Natural killer cell (primary cell): ENCODE measurements at regions of chr11 and their contacts with region 1.

Region 1: DNA sequence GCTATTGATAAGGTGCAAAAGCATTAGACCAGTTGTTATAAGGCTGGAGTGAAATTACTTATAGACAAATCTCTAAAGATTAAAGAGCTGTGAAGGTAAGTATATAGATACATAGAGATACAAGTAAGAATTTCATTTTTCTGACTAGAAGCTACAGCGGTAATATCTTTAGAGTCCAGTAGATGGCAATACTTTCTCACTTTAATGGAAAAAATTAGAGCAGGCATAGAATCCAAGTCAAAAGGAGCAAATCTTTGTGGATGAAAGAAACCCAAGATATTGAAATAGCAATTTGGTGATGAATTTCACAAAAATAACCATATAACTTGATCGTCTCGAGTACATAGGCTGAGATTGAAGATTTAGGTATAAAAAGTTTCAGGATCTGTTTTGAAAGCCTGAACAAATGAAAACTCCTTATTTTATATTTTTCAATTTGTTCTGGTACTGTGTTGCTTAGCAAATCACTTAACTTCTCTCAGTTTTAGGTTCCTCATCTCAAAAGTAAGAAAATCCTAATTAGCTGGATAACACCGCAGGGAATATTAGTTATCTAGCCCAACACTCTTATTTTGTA is 81.9 kb downstream of the UVRAG start:
- DNase-seq: peak in 1 of 2 donors; percentile 53
- ATAC-seq: peak in 2 of 3 donors; percentile 50 to 64
- H3K4me3 ChIP-seq: no peak overlapping the region
- H3K4me3 Mint-ChIP-seq: no peak overlapping the region
- H3K27ac ChIP-seq: no peak overlapping the region
- H3K27ac Mint-ChIP-seq: no peak overlapping the region
- H3K4me1 ChIP-seq: no peaks in the 10 kb centered on the region
- H3K4me1 Mint-ChIP-seq: peaks cover 0 to 9% of the 10 kb centered on the region in 2 donors
- H3K27me3 ChIP-seq: no peaks in the 10 kb centered on the region
- H3K27me3 Mint-ChIP-seq: no peaks in the 10 kb centered on the region
- CTCF ChIP-seq: peak; percentile 74

Region 2: GRCh38 chr11:75547580-75548058 is 349.3 kb before region 1 on chr11:
- intact Hi-C with region 1: no loop called
- DNase-seq: peak in 1 of 2 donors; percentile 67
- ATAC-seq: peak; percentile 49 to 68 (median 55)
- H3K4me3 ChIP-seq: no peak overlapping the region
- H3K4me3 Mint-ChIP-seq: no peak overlapping the region
- H3K27ac ChIP-seq: no peak overlapping the region
- H3K27ac Mint-ChIP-seq: peak overlapping the region in 1 of 2 donors; percentile 59
- H3K4me1 ChIP-seq: peaks cover 3% of the 10 kb centered on the region
- H3K4me1 Mint-ChIP-seq: peaks cover 0 to 9% of the 10 kb centered on the region in 2 donors
- H3K27me3 ChIP-seq: no peaks in the 10 kb centered on the region
- H3K27me3 Mint-ChIP-seq: peaks cover 0 to 8% of the 10 kb centered on the region in 2 donors
- CTCF ChIP-seq: peak; percentile 87

Region 3: DNA sequence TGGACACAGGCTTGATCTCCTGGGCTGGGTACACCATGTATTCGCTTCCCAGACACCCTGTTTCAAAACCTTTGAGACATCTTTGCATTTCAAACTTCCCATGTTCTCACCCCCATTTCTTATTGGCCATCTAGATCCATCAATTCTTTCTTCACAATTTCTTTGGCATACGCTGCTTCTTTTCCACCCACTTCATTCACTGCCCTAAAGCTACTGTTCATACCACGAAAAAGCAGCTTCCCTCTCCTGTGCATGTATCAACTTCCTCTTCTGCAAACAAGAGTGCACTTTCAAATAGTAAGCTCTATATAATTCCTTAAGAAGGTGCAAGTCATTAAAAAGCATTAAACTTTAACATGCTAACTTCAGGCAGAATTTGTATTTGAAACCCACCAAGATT is 60.5 kb before region 1 on chr11:
- intact Hi-C with region 1: no loop called
- DNase-seq: no peak
- ATAC-seq: no peak
- H3K4me3 ChIP-seq: no peak overlapping the region
- H3K4me3 Mint-ChIP-seq: no peak overlapping the region
- H3K27ac ChIP-seq: no peak overlapping the region
- H3K27ac Mint-ChIP-seq: peak overlapping the region in 1 of 2 donors; percentile 1
- H3K4me1 ChIP-seq: peaks cover 4% of the 10 kb centered on the region
- H3K4me1 Mint-ChIP-seq: peaks cover 34 to 69% of the 10 kb centered on the region in 2 donors
- H3K27me3 ChIP-seq: no peaks in the 10 kb centered on the region
- H3K27me3 Mint-ChIP-seq: no peaks in the 10 kb centered on the region
- CTCF ChIP-seq: no peak

Region 4: GRCh38 chr11:76152086-76152681 is 255.3 kb after region 1 on chr11:
- intact Hi-C with region 1: loop called (anchors 1 kb)
- DNase-seq: peak; percentile 73 to 85
- ATAC-seq: peak; percentile 82 to 85 (median 83)
- H3K4me3 ChIP-seq: peak overlapping the region; percentile 34
- H3K4me3 Mint-ChIP-seq: peak overlapping the region; percentile 84
- H3K27ac ChIP-seq: no peak overlapping the region
- H3K27ac Mint-ChIP-seq: peak overlapping the region; percentile 88 to 92
- H3K4me1 ChIP-seq: peaks cover 30% of the 10 kb centered on the region
- H3K4me1 Mint-ChIP-seq: peaks cover 36 to 38% of the 10 kb centered on the region in 2 donors
- H3K27me3 ChIP-seq: no peaks in the 10 kb centered on the region
- H3K27me3 Mint-ChIP-seq: peaks cover 0 to 2% of the 10 kb centered on the region in 2 donors
- CTCF ChIP-seq: peak; percentile 85